IMR-90 (cell line): ENCODE measurements at regions of chr9 and their contacts with region 1.

Region 1: GRCh38 chr9:98207606-98208005 is 15.2 kb upstream of the CORO2A start:
- DNase-seq: peak; percentile 20
- ATAC-seq: no peak; the same call in 1 of the 2 replicates
- H3K4me3 ChIP-seq: no peak overlapping the region
- H3K27ac ChIP-seq: no peak overlapping the region
- H3K4me1 ChIP-seq: no peaks in the 10 kb centered on the region
- H3K27me3 ChIP-seq: no peaks in the 10 kb centered on the region
- CTCF ChIP-seq: no peak
- POLR2A ChIP-seq: no peak
- RAD21 ChIP-seq: no peak

Region 2: DNA sequence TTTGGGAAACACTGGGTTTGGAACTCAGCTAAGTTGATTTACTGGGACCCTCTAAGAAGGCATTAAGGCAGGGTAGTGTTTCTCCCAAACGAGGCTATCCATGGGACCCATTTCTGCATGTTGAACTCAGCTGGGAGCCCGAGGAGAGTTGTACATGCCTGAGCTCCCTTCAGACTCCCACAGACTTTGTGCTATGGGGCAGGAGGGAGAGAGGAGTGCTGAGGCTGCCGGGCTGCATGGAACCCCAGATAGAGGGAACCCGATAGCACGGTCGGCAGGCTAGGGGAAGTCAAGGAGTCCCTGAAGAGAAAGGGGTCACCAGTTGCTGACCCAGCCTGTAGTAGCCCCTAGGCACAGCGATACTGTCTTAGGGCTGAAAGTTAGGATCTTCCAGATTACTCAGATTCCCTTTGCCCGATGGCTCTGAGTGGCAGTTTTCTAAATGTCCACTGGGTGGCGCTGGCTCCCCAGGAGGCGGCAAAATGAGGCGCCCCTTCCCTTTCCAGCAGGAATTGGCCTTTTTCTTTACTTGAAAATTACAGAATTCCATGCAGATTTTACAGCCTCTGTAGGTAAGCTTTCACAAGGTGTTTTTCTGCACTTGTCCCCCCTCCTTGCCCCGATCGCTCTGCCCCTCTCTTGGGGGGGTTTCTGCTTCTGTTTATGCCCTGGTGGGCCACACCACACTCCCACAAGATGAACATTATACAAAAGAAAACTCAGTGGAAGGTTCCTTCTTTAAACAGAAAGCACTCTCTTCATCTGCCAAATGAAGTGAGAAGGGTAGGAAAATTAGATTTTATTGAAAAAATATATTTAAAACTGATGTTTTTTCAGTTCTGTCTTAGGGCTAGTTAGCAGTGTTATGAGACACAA is 133.3 kb before region 1 on chr9:
- CTCF ChIA-PET with region 1: no interaction called
- POLR2A ChIA-PET with region 1: no interaction called
- dilution Hi-C with region 1: no loop called
- in situ Hi-C with region 1: no loop called
- intact Hi-C with region 1: loop called (anchors 1 kb)
- DNase-seq: peak; percentile 59
- ATAC-seq: peak; percentile 91
- H3K4me3 ChIP-seq: no peak overlapping the region
- H3K27ac ChIP-seq: 0 out of 2 replicates have a peak overlapping the region, but pooled peaks have one; percentile 0
- H3K4me1 ChIP-seq: peaks cover 5% of the 10 kb centered on the region
- H3K27me3 ChIP-seq: no peaks in the 10 kb centered on the region
- CTCF ChIP-seq: peak; percentile 94
- POLR2A ChIP-seq: no peak
- RAD21 ChIP-seq: peak; percentile 85

Region 3: DNA sequence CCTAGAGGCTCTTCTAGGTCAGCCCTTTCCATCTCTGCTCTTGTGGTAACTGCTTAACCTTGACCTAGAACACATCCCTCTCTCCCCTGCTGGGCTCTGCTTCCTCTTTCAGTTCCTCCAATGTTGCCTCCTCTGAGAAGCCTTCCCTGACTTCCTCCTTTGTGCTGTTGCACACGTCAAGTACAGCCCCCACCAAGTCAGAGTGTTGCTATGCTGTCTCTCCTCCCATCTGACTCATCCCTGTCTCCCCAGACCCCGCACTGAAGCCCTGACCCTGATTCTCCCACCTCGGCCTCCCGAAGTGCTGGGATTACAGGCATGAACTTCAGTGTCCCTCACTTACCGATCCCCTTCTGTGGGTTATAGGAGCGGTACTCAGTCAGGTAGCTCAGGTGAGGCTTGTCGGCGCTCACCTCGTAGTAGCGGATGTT is 78.1 kb before region 1 on chr9:
- CTCF ChIA-PET with region 1: no interaction called
- POLR2A ChIA-PET with region 1: no interaction called
- dilution Hi-C with region 1: no loop called
- in situ Hi-C with region 1: no loop called
- intact Hi-C with region 1: no loop called
- DNase-seq: peak; percentile 7
- ATAC-seq: peak; percentile 21; the same call in 1 of the 2 replicates
- H3K4me3 ChIP-seq: no peak overlapping the region
- H3K27ac ChIP-seq: no peak overlapping the region
- H3K4me1 ChIP-seq: no peaks in the 10 kb centered on the region
- H3K27me3 ChIP-seq: no peaks in the 10 kb centered on the region; the same call in 1 of the 2 replicates
- CTCF ChIP-seq: no peak
- POLR2A ChIP-seq: no peak
- RAD21 ChIP-seq: no peak

Region 4: DNA sequence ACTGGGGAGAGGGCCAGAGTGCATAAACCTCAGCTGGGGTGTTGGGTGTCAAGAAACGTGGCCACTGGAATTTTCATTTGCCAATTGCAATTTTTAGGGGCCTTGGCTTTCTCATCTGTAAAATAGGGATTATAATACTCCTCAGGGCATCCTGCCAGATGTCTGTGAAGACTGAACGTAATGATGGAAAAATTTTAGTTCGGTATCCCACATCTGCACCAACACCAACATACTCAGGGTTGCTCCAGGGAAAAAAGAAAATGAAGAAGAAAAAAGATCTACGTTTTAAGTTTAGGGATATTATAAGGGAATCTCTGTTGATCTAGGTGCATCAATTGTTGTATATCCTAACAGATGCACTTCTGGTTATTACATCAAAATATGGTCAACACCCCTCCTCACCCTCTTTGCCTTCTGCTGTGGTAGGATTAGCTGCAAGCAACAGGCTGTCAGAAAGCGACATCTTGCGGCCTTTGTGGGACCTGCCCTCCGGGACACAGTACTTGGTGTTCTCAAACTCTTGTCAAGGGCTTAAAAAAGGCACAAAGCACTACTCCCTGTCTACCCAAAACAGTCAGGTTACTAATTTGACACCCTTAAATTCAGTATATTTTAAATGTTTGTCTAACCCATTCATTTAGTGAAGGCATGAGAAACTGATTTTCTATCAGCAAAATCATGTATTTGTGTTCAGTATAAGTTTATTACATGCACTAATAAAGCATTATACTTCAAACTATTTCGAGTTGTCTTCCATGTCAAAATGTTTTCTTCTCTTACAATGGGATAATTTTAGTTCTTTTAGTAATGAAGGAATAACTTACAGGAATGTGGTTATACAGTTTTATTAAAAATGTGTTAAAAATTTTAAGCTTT is 56.1 kb after region 1 on chr9:
- CTCF ChIA-PET with region 1: interaction called, 8 read pairs
- POLR2A ChIA-PET with region 1: no interaction called
- dilution Hi-C with region 1: no loop called
- in situ Hi-C with region 1: loop called (anchors 5 kb)
- intact Hi-C with region 1: loop called (anchors 1 kb)
- DNase-seq: peak; percentile 84
- ATAC-seq: peak; percentile 100
- H3K4me3 ChIP-seq: no peak overlapping the region
- H3K27ac ChIP-seq: no peak overlapping the region
- H3K4me1 ChIP-seq: peaks cover 2% of the 10 kb centered on the region
- H3K27me3 ChIP-seq: no peaks in the 10 kb centered on the region
- CTCF ChIP-seq: peak; percentile 97
- POLR2A ChIP-seq: no peak; the same call in 1 of the 2 replicates
- RAD21 ChIP-seq: peak; percentile 100

Region 5: DNA sequence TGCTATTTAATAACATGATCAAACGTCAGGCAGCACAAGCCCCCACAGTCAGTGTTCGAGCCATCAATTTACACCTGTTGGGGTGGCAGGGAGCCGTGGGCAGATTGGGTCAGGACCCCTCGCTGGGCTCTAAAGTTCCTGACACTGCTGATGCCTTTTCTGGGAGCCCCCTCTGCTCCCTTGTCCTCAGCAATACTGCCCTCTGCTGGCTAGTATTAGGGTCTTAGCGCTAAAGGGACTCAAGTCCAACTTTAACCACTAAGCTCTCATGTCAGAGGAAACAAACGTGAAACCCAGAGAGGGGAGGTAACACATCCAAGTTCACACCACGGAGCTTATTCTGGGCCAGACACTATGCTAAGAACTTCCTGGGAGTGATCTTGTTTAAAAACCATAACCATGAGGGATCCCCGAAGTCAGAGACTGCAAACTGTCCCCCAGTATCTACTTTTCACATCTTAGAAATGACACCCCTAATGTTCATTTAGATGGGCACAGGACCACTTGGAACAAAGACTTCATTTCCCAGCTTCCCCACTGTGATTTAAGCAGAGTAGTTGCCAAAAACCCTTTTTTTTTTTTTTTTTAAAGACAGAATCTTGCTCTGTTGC is 568.3 kb after region 1 on chr9:
- CTCF ChIA-PET with region 1: interaction called, 5 read pairs
- POLR2A ChIA-PET with region 1: no interaction called
- dilution Hi-C with region 1: no loop called
- in situ Hi-C with region 1: no loop called
- intact Hi-C with region 1: loop called (anchors 1 kb)
- DNase-seq: peak; percentile 79
- ATAC-seq: peak; percentile 79
- H3K4me3 ChIP-seq: no peak overlapping the region
- H3K27ac ChIP-seq: no peak overlapping the region
- H3K4me1 ChIP-seq: 0 out of 2 replicates have a peak, but pooled peaks cover 1% of the 10 kb centered on the region
- H3K27me3 ChIP-seq: no peaks in the 10 kb centered on the region
- CTCF ChIP-seq: peak; percentile 86
- POLR2A ChIP-seq: no peak
- RAD21 ChIP-seq: peak; percentile 90

Region 6: GRCh38 chr9:98791147-98792095 is 583.8 kb after region 1 on chr9:
- CTCF ChIA-PET with region 1: no interaction called
- POLR2A ChIA-PET with region 1: no interaction called
- dilution Hi-C with region 1: no loop called
- in situ Hi-C with region 1: no loop called
- intact Hi-C with region 1: loop called (anchors 5 kb)
- DNase-seq: peak; percentile 94
- ATAC-seq: peak; percentile 89
- H3K4me3 ChIP-seq: no peak overlapping the region
- H3K27ac ChIP-seq: no peak overlapping the region
- H3K4me1 ChIP-seq: peaks cover 9% of the 10 kb centered on the region
- H3K27me3 ChIP-seq: no peaks in the 10 kb centered on the region
- CTCF ChIP-seq: peak; percentile 98
- POLR2A ChIP-seq: no peak
- RAD21 ChIP-seq: peak; percentile 74

Region 7: DNA sequence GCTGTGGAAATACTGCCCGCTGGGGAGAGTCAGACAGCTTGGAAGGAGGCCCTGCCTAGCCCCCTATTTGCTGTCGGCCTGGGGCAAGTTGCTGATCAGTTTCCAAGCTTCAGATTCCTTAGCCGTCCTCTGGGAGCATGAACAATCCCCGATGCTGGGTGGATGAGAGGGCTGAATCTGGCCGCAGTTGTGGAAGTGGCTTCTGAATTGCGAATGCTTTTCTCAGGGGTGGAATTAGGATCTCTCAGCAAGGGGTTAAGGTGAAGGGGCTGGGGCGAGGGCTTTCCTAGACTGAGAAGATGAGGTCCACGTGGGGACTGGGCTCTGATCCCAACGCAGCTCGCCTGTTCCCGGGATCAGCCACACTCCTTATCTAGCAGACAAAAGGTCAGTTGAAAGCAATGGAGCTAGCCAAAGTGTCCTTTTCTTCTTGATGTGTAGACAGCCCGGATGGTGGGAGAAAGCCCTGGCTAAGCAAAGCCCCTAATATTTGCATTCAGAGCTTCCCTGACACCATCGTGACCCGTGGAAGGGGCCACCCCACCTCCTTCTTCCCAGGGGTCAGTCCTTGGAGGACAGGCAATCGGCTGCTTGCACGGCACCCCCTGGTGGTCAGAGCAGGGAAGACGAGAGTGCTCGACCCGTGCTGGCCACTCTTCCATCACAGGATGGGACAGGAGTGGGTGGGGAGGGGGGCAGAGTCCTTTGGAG is 791.0 kb after region 1 on chr9:
- CTCF ChIA-PET with region 1: no interaction called
- POLR2A ChIA-PET with region 1: no interaction called
- dilution Hi-C with region 1: no loop called
- in situ Hi-C with region 1: no loop called
- intact Hi-C with region 1: no loop called
- DNase-seq: peak; percentile 56
- ATAC-seq: peak; percentile 86
- H3K4me3 ChIP-seq: no peak overlapping the region
- H3K27ac ChIP-seq: peak overlapping the region; percentile 31; the same call in 1 of the 2 replicates
- H3K4me1 ChIP-seq: peaks cover 17% of the 10 kb centered on the region
- H3K27me3 ChIP-seq: no peaks in the 10 kb centered on the region
- CTCF ChIP-seq: peak; percentile 78
- POLR2A ChIP-seq: no peak
- RAD21 ChIP-seq: peak; percentile 89